ENCODE measurements at regions of chr10 and their contacts with region 1.

Region 1: GRCh38 chr10:59240582-59241183 is 64.2 kb downstream of the PHYHIPL start:
- DNase-seq: peak; percentile 49
- H3K4me3 Mint-ChIP-seq: no peak overlapping the region
- H3K27ac Mint-ChIP-seq: no peak overlapping the region
- H3K4me1 Mint-ChIP-seq: no peaks in the 10 kb centered on the region
- H3K27me3 Mint-ChIP-seq: peaks cover 47% of the 10 kb centered on the region
- CTCF ChIP-seq: peak; percentile 60

Region 2: GRCh38 chr10:59465088-59465487 is 224.4 kb after region 1 on chr10:
- CTCF ChIA-PET with region 1: no interaction called
- intact Hi-C with region 1: loop called (anchors 1 kb)
- DNase-seq: peak; percentile 6
- H3K4me3 Mint-ChIP-seq: no peak overlapping the region
- H3K27ac Mint-ChIP-seq: no peak overlapping the region
- H3K4me1 Mint-ChIP-seq: no peaks in the 10 kb centered on the region
- H3K27me3 Mint-ChIP-seq: peaks cover 31% of the 10 kb centered on the region
- CTCF ChIP-seq: no peak

Region 3: GRCh38 chr10:59580026-59580863 is 339.6 kb after region 1 on chr10:
- CTCF ChIA-PET with region 1: interaction called, 3 read pairs
- intact Hi-C with region 1: loop called (anchors 1 kb)
- DNase-seq: peak; percentile 8
- H3K4me3 Mint-ChIP-seq: no peak overlapping the region
- H3K27ac Mint-ChIP-seq: no peak overlapping the region
- H3K4me1 Mint-ChIP-seq: no peaks in the 10 kb centered on the region
- H3K27me3 Mint-ChIP-seq: peaks cover 53% of the 10 kb centered on the region
- CTCF ChIP-seq: peak; percentile 39